Calu3 (cell line): ENCODE measurements at regions of chr12 and their contacts with region 1.

Region 1: DNA sequence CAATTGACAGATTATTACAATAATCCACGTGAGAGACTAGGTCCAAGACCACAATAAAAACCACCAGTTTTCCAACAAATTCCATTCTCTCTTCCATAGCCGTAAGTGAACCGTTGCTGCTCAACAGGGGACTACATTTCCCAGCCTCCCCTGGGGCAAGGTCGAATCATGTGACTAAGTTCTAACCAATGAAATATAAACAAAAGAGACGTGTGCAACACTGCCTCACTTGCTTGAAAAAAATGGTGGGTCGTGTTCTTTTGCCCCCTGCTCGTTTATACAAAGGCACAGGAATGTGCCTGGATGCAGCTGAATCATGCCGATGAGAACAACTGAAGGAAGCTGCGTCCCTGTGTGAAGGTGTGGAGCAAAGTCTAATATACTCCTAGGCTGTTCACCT is 51.1 kb downstream of the HSPB8 start:
- DNase-seq: peak; percentile 63
- H3K4me3 Mint-ChIP-seq: peak overlapping the region; percentile 46
- H3K27ac Mint-ChIP-seq: no peak overlapping the region
- H3K4me1 Mint-ChIP-seq: peaks cover 20% of the 10 kb centered on the region
- H3K27me3 Mint-ChIP-seq: peaks cover 54% of the 10 kb centered on the region
- CTCF ChIP-seq: no peak

Region 2: DNA sequence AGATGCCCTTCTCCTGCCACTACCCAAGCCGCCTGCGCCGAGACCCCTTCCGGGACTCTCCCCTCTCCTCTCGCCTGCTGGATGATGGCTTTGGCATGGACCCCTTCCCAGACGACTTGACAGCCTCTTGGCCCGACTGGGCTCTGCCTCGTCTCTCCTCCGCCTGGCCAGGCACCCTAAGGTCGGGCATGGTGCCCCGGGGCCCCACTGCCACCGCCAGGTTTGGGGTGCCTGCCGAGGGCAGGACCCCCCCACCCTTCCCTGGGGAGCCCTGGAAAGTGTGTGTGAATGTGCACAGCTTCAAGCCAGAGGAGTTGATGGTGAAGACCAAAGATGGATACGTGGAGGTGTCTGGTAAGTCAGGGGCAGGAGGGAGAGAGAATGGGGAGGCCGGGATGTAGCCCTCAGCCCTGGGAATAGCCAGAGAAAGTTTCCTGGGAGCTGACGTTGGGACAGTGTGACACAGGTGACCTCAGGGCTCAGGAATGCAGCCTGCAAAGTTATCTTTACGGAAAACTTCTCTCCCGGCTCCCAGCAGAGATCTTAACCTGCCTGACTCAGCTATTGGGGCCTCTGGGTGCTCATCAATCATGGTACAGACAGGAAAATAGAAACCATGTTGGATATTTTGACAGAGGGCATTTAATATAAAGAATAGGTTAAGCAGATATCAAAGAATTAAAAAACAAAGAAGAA is 50.4 kb before region 1 on chr12:
- CTCF ChIA-PET with region 1: interaction called, 4 read pairs
- intact Hi-C with region 1: loop called (anchors 5 kb)
- DNase-seq: peak; percentile 52
- H3K4me3 Mint-ChIP-seq: peak overlapping the region; percentile 68
- H3K27ac Mint-ChIP-seq: peak overlapping the region; percentile 55
- H3K4me1 Mint-ChIP-seq: peaks cover 39% of the 10 kb centered on the region
- H3K27me3 Mint-ChIP-seq: no peaks in the 10 kb centered on the region
- CTCF ChIP-seq: no peak